Lower leg skin (tissue), 4 donors: ENCODE measurements at regions of chr4 and their contacts with region 1.

Region 1: GRCh38 chr4:147096667-147097604 is 151.3 kb upstream of the TTC29 start:
- DNase-seq: no peak
- H3K4me3 ChIP-seq: no peak overlapping the region
- CTCF ChIP-seq: no peak
- POLR2A ChIP-seq: no peak

Region 2: DNA sequence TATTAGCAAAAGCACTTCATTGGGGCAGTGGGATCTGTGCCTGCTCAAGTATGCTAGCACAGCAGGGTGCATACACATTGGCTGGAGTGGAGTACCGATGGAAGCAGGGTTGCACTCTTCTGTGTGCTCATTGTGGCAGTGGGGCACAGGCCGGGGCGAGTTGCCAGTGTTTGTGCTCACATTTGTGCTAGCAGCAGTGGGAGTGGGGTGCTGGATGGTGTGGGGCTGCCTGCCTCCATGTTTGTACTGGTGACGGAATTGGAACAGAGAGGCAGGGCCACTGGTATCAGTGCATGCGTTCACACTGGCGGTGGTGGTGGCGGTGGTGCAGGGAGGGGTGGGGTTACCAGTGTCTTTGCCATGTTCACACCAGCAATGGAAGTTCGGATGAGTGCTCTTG is 320.2 kb before region 1 on chr4:
- intact Hi-C with region 1: no loop called
- DNase-seq: peak in 1 of 2 donors; percentile 80
- H3K4me3 ChIP-seq: no peak overlapping the region
- CTCF ChIP-seq: no peak
- POLR2A ChIP-seq: no peak

Region 3: DNA sequence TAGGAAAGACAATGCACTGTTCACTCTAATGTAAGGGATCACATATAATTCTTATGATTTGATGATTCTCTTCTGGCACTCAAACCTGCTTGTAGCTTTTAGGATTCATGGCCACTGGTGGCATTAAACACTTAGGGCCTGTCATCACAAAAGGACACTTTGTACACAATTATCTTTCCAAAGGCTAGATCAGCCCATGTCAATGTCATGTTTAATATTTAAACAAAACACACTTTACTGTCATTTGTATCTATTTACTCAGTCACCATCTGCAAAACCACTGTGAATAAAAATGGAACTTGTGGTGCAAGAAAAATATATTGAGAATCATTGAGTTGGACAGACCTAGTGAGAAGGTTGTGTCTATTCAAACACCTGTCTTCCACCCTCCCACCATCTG is 67.6 kb before region 1 on chr4:
- intact Hi-C with region 1: loop called (anchors 10 kb)
- DNase-seq: no peak
- H3K4me3 ChIP-seq: no peak overlapping the region
- CTCF ChIP-seq: no peak
- POLR2A ChIP-seq: no peak